Ascending aorta (tissue), 2 donors: ENCODE measurements at regions of chr11 and their contacts with region 1.

Region 1: DNA sequence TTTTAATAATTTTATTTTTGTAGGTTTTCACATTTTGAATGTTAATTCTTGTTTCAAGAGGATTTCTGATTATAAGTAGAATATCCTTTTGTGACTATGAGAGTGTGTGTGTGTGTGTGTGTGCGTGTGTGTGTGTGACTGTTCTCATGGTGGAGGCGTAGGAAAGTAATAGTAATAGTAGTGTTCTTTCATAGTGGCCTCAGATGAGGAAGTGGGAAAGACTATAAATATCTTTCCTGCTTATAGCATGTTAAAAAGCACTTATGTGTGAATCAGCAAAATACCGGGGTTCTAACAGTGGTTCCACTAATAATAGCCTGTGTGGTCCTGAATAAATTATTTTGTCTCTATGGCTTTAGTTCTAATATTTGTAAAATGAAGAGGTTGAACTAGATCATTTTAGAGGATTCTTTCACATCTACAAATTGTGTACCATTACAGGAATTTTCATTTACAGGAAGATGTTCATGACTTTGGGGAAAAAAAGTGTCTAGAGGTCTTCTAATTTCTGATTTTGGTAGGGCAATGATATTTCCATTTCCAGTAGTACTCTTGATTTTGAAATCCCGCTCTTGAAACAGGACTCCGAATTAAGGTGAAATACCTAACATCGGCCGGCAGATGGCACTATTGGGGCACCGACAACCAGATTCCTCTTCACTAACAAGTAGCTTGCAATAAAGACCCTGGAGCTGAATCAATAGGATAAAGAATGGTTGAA is 29.9 kb upstream of the OR10G7 start:
- DNase-seq: peak in 1 of 2 donors; percentile 69
- H3K4me3 ChIP-seq: peak overlapping the region in 1 of 2 donors; percentile 49
- H3K27ac ChIP-seq: no peak overlapping the region
- H3K4me1 ChIP-seq: peaks cover 5% of the 10 kb centered on the region in 2 donors
- H3K27me3 ChIP-seq: no peaks in the 10 kb centered on the region
- CTCF ChIP-seq: peak; percentile 46 to 75 (median 75)

Region 2: DNA sequence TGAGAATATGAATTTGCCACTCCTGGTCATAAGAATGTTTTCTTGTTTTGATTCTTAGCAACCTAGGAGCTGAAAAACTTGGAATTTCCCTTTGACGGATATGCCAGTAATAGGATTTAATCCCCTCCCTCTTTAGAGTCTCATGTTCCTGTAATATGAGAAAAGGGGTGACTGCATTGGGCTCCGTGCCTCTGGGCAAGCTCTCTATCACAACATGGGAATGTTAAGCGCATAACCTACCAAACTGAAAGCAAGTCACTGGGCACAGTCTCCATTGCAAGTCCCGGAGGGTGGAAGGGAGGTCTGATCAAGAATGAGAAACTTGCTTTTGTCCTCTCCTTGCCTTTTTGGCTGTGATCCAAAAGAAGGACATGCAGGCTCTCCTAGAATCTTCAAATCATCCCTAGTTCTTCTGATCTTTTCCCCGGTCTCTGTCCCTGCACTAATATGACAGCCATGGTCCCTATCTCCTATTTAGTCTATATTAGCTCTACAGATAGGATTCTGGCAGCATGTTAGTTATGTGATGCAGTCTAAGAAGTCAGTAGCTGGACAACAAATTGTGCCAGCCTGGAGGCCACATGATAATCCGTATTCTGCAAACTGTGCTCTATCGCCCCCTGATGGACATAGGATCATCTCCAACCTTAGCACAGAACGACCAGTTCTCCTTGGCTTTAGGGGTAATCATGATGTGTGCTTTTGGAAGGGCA is 123.8 kb after region 1 on chr11:
- intact Hi-C with region 1: loop called (anchors 1 kb)
- DNase-seq: peak; percentile 40 to 80
- H3K4me3 ChIP-seq: peak overlapping the region in 1 of 2 donors; percentile 51
- H3K27ac ChIP-seq: peak overlapping the region; percentile 73 to 79
- H3K4me1 ChIP-seq: peaks cover 0 to 5% of the 10 kb centered on the region in 2 donors
- H3K27me3 ChIP-seq: no peaks in the 10 kb centered on the region
- CTCF ChIP-seq: peak; percentile 61 to 80 (median 65)

Region 3: GRCh38 chr11:124329787-124330478 is 258.9 kb after region 1 on chr11:
- intact Hi-C with region 1: loop called (anchors 2 kb)
- DNase-seq: no peak
- H3K4me3 ChIP-seq: no peak overlapping the region
- H3K27ac ChIP-seq: no peak overlapping the region
- H3K4me1 ChIP-seq: no peaks in the 10 kb centered on the region
- H3K27me3 ChIP-seq: no peaks in the 10 kb centered on the region
- CTCF ChIP-seq: peak in 2 of 3 experiments; percentile 8 to 14

Region 4: GRCh38 chr11:124586238-124586860 is 515.3 kb after region 1 on chr11:
- intact Hi-C with region 1: loop called (anchors 10 kb)
- DNase-seq: no peak
- H3K4me3 ChIP-seq: no peak overlapping the region
- H3K27ac ChIP-seq: no peak overlapping the region
- H3K4me1 ChIP-seq: no peaks in the 10 kb centered on the region
- H3K27me3 ChIP-seq: no peaks in the 10 kb centered on the region
- CTCF ChIP-seq: peak; percentile 26 to 56 (median 45)